ENCODE measurements at regions of chr14 and their contacts with region 1.

Region 1: DNA sequence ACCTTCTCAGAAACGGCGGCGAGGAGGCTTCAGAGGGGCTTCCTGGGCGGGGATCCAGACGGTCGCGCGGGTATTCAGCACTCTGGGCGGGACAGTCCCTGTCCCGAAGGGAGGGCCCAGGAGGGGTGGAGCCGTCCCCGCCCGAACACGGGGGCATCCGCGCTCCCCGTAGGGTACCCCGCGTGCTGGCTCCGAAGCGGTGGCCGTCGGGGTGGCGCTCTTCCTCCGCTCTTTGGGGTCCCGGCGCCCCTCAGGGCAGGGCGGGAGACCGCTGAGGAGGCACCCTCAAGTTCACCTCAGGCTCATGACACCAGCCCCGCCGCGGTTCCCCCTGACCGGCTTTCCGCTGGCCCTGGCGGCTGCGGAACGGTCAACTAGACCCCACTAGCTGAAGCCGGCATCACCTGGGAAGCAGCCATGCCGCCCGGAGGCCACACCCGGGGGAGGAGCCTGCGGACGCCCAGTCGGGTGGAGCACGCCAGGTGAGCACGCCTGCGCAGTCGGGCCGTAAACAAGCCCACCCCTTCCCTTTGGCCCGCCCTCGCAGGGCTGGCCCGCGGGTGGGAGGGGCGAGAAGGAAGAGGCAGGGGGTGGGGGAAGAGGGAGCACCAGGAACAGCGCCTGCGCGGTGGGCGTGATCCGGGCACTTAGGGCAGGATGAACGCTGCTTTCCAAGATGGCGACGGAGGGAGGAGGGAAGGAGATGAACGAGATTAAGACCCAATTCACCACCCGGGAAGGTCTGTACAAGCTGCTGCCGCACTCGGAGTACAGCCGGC is at the start of gene WDR20:
- DNase-seq: peak; percentile 99
- ATAC-seq: peak; percentile 94
- H3K4me3 Mint-ChIP-seq: peak within 1 kb of the TSS; percentile 97
- H3K27ac Mint-ChIP-seq: peak within 1 kb of the TSS; percentile 93
- H3K4me1 Mint-ChIP-seq: peaks cover 19% of the 10 kb centered on the region
- H3K27me3 Mint-ChIP-seq: no peaks in the 10 kb centered on the region
- CTCF ChIP-seq: no peak
- total RNA-seq, gene WDR20: 41.1 and 42.3 TPM in 2 replicates

Region 2: GRCh38 chr14:101862177-101862576 is 277.3 kb before region 1 on chr14:
- CTCF ChIA-PET with region 1: no interaction called
- POLR2A ChIA-PET with region 1: no interaction called
- intact Hi-C with region 1: no loop called
- DNase-seq: no peak
- ATAC-seq: no peak
- H3K4me3 Mint-ChIP-seq: no peak overlapping the region
- H3K27ac Mint-ChIP-seq: no peak overlapping the region
- H3K4me1 Mint-ChIP-seq: peaks cover 16% of the 10 kb centered on the region
- H3K27me3 Mint-ChIP-seq: no peaks in the 10 kb centered on the region
- CTCF ChIP-seq: no peak

Region 3: GRCh38 chr14:101947906-101948665 is 191.4 kb before region 1 on chr14:
- CTCF ChIA-PET with region 1: no interaction called
- POLR2A ChIA-PET with region 1: no interaction called
- intact Hi-C with region 1: loop called (anchors 1 kb)
- DNase-seq: peak; percentile 98
- ATAC-seq: peak; percentile 95
- H3K4me3 Mint-ChIP-seq: peak overlapping the region; percentile 93
- H3K27ac Mint-ChIP-seq: peak overlapping the region; percentile 97
- H3K4me1 Mint-ChIP-seq: peaks cover 19% of the 10 kb centered on the region
- H3K27me3 Mint-ChIP-seq: peaks cover 22% of the 10 kb centered on the region
- CTCF ChIP-seq: no peak

Region 4: DNA sequence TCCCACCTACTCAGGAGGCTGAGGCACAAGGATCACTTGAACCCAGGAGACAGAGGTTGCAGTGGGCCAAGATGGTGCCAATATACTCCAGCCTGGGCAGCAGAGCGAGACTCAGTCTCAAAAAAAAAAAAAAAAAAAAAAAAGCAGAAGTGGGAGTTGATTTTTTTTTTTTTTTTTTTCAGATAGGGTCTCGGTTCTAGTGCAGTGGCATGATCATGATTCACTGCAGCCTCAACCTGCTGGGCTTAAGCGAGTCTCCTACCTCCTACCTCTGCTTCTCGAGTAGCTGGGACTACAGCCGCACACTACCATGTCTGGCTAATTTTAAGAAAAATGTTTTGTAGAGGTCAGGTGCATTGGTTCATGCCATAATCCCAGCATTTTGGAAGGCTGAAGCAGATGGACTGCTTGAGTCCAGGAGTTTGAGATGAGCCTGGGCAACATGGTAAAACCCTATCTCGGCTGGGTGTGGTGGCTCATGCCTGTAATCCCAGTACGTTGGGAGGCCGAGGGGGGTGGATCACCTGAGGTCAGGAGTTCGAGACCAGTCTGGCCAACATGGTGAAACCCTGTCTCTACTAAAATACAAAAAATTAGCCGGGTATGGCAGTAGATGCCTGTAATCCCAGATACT is 36.3 kb before region 1 on chr14:
- CTCF ChIA-PET with region 1: no interaction called
- POLR2A ChIA-PET with region 1: interaction called, 6 read pairs
- intact Hi-C with region 1: loop called (anchors 1 kb)
- DNase-seq: no peak
- ATAC-seq: peak; percentile 94
- H3K4me3 Mint-ChIP-seq: no peak overlapping the region
- H3K27ac Mint-ChIP-seq: peak overlapping the region; percentile 76
- H3K4me1 Mint-ChIP-seq: peaks cover 31% of the 10 kb centered on the region
- H3K27me3 Mint-ChIP-seq: no peaks in the 10 kb centered on the region
- CTCF ChIP-seq: no peak

Region 5: GRCh38 chr14:102182190-102182589 is 42.8 kb after region 1 on chr14:
- CTCF ChIA-PET with region 1: no interaction called
- POLR2A ChIA-PET with region 1: no interaction called
- intact Hi-C with region 1: no loop called
- DNase-seq: no peak
- ATAC-seq: no peak
- H3K4me3 Mint-ChIP-seq: no peak overlapping the region
- H3K27ac Mint-ChIP-seq: no peak overlapping the region
- H3K4me1 Mint-ChIP-seq: peaks cover 43% of the 10 kb centered on the region
- H3K27me3 Mint-ChIP-seq: no peaks in the 10 kb centered on the region
- CTCF ChIP-seq: no peak

Region 6: GRCh38 chr14:102304611-102305509 is 165.4 kb after region 1 on chr14 and contains the start of gene MOK:
- CTCF ChIA-PET with region 1: no interaction called
- POLR2A ChIA-PET with region 1: interaction called, 5 read pairs
- intact Hi-C with region 1: loop called (anchors 1 kb)
- DNase-seq: peak; percentile 99
- ATAC-seq: peak; percentile 88
- H3K4me3 Mint-ChIP-seq: peak within 1 kb of the TSS; percentile 96
- H3K27ac Mint-ChIP-seq: peak within 1 kb of the TSS; percentile 95
- H3K4me1 Mint-ChIP-seq: peaks cover 9% of the 10 kb centered on the region
- H3K27me3 Mint-ChIP-seq: peaks cover 4% of the 10 kb centered on the region
- CTCF ChIP-seq: no peak
- total RNA-seq, gene MOK: 1.8 and 3.1 TPM in 2 replicates